Activated B cell treated with CpG ODN at 0.5 μM for 24 hours (primary cell): ENCODE measurements at regions of chr14 and their contacts with region 1.

Region 1: DNA sequence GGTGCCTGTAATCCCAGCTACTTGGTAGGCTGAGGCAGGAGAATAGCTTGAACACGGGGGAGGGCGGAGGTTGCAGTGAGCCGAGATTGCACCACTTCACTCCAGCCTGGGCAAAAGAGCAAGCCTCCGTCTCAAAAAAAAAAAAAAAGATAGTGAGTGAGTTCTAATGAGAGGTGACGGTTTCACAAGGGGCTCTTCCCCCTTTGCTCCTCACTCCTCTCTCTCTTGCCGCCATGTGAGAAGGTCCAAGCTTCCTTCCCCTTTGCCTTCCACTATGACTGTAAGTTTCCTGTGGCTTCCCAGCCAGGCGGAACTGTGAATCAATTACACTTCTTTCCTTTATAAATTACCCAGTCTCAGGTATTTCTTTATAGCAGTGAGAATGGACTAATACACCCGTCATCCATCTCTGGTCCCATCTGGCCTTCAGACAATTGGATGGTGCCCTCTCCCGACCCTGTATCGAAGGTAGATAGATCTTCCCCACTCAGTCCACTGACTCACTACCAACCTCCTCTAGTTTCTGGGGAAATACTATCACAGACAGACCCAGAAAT is 27.0 kb upstream of the RCOR1 start:
- DNase-seq: no peak
- ATAC-seq: peak; percentile 68
- H3K4me3 Mint-ChIP-seq: peak overlapping the region; percentile 51
- H3K27ac Mint-ChIP-seq: peak overlapping the region; percentile 65
- H3K4me1 Mint-ChIP-seq: peaks cover 39% of the 10 kb centered on the region
- H3K27me3 Mint-ChIP-seq: no peaks in the 10 kb centered on the region
- CTCF ChIP-seq: no peak

Region 2: GRCh38 chr14:102555264-102555831 is 10.1 kb before region 1 on chr14:
- CTCF ChIA-PET with region 1: no interaction called
- POLR2A ChIA-PET with region 1: interaction called, 4 read pairs
- intact Hi-C with region 1: loop called (anchors 1 kb)
- DNase-seq: peak; percentile 66
- ATAC-seq: peak; percentile 86
- H3K4me3 Mint-ChIP-seq: peak overlapping the region; percentile 78
- H3K27ac Mint-ChIP-seq: peak overlapping the region; percentile 69
- H3K4me1 Mint-ChIP-seq: peaks cover 6% of the 10 kb centered on the region
- H3K27me3 Mint-ChIP-seq: no peaks in the 10 kb centered on the region
- CTCF ChIP-seq: no peak